ENCODE measurements at regions of chr15 and their contacts with region 1.

Region 1: GRCh38 chr15:90086868-90087268 is 15.4 kb downstream of the IDH2 start:
- DNase-seq: no peak
- ATAC-seq: no peak
- H3K4me3 ChIP-seq: no peak overlapping the region
- H3K27ac ChIP-seq: peak overlapping the region in 1 of 12 donors; percentile 52
- H3K4me1 ChIP-seq: peaks cover 0 to 19% (median 0%) of the 10 kb centered on the region in 12 donors
- H3K27me3 ChIP-seq: no peaks in the 10 kb centered on the region
- CTCF ChIP-seq: peak; percentile 27 to 65 (median 53)
- POLR2A ChIP-seq: no peak

Region 2: DNA sequence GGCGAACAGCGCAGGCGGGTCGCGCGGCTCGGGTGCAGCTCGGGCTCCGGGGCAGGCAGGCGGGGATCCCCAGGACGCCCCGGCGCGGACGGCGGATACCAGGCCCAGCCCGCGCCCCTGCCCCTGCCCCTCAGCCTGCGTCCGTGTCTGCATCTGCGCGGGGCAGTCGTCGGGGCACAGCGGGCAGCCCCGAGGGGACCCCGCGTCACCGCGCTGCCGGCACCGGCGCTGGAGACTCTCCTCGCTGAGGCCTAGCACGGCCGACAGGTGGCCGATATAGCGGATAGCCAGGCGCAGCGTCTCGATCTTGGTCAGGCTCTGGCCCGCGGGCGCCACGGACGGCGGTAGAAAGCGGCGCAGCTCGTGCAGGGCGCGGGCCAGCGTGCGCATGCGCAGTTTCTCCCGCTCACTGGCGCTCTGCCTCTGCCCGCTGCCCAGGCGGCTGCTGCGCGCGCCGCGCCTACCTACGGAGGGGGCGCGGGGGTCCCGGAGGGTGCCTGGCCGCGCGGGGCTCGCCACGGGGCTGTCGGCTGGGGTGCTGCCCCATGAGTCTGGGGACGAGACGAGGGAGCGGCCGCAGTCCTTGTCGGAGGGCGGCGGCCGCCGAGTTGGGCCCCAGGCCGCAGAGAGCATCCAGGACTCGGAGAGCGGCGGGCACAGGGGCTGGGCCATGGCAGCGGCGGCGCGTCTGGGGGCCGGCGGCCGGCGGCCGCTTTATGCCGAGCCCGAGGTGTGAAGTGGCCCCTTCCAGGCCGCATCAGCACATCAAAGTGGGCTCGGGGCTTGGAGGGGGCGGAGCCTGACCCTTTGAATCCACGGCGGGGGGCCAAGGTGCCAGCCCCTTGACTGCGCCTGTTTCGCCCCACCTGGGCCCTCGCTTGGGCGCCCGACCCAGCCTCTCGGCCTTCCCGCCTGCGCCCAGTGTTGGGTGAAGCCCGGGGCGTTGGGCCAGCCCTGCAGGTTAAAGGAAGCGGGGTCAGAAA is 336.0 kb before region 1 on chr15 and contains the start of gene MESP1:
- intact Hi-C with region 1: loop called in 1 of 10 experiments (anchors 10 kb)
- DNase-seq: peak; percentile 90 to 96 (median 93)
- ATAC-seq: peak; percentile 89 to 97 (median 94)
- H3K4me3 ChIP-seq: peak within 1 kb of the TSS; percentile 57 to 84 (median 74)
- H3K27ac ChIP-seq: peak within 1 kb of the TSS in 7 of 12 donors; percentile 27 to 81 (median 57)
- H3K4me1 ChIP-seq: peaks cover 0 to 18% (median 12%) of the 10 kb centered on the region in 12 donors
- H3K27me3 ChIP-seq: peaks cover 0 to 22% (median 4%) of the 10 kb centered on the region in 9 donors
- CTCF ChIP-seq: peak; percentile 40 to 93 (median 68)
- POLR2A ChIP-seq: peak in 1 of 2 donors; percentile 52
- total RNA-seq, gene MESP1: 1.3 to 6.9 (median 5.1) TPM

Region 3: DNA sequence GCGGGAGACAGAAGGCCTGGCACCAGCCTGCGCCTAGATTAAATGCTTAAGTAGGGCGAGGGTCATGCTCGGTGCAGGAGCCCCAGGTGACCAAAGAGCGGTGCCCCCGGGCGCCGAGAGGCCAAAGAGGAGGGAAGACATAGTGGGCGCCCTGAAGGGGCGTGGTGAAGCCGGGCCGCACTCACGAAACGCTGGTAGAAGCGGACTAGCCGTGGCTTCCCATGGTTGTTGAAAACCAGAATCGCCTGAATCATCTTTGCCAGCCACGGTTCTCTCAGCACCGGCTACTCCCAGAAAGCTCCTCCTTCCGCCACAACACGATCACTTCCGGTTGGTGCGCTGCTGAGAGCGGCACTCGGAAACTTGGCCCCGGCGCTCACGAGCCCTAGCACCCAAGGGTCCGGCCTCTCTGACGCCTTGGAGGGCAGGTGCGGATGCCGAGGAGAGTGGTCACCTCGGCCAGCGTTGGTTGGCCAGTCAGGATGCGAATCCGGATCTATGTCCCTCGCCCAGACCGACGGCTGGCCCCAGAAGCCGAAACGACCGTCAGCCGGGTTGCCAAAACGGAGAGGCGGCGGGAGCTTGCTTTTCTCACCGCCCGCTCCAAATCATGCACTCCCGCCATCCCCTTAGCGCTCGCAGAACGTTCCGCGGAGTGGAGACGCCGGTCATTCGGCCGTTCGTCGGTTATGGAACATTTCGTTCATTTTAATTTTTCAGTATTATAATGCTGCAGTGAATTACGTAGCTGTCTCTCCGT is 193.0 kb before region 1 on chr15 and contains the start of gene AP3S2:
- intact Hi-C with region 1: loop called in 1 of 10 experiments (anchors 5 kb)
- DNase-seq: peak; percentile 90 to 94 (median 93)
- ATAC-seq: peak; percentile 98 to 99 (median 99)
- H3K4me3 ChIP-seq: peak within 1 kb of the TSS; percentile 55 to 100 (median 91)
- H3K27ac ChIP-seq: peak within 1 kb of the TSS; percentile 42 to 98 (median 92)
- H3K4me1 ChIP-seq: peaks cover 0 to 30% (median 13%) of the 10 kb centered on the region in 12 donors
- H3K27me3 ChIP-seq: no peaks in the 10 kb centered on the region
- CTCF ChIP-seq: peak in 1 of 12 donors; percentile 7
- POLR2A ChIP-seq: peak in 1 of 2 donors; percentile 61
- total RNA-seq, gene AP3S2: 37.1 to 64.6 (median 43.3) TPM

Region 4: GRCh38 chr15:90126457-90127435 is 39.9 kb after region 1 on chr15:
- intact Hi-C with region 1: no loop called
- DNase-seq: peak; percentile 63 to 90 (median 74)
- ATAC-seq: peak; percentile 81 to 95 (median 91)
- H3K4me3 ChIP-seq: no peak overlapping the region
- H3K27ac ChIP-seq: peak overlapping the region; percentile 30 to 89 (median 77)
- H3K4me1 ChIP-seq: peaks cover 0 to 10% (median 2%) of the 10 kb centered on the region in 12 donors
- H3K27me3 ChIP-seq: no peaks in the 10 kb centered on the region
- CTCF ChIP-seq: no peak
- POLR2A ChIP-seq: no peak

Region 5: DNA sequence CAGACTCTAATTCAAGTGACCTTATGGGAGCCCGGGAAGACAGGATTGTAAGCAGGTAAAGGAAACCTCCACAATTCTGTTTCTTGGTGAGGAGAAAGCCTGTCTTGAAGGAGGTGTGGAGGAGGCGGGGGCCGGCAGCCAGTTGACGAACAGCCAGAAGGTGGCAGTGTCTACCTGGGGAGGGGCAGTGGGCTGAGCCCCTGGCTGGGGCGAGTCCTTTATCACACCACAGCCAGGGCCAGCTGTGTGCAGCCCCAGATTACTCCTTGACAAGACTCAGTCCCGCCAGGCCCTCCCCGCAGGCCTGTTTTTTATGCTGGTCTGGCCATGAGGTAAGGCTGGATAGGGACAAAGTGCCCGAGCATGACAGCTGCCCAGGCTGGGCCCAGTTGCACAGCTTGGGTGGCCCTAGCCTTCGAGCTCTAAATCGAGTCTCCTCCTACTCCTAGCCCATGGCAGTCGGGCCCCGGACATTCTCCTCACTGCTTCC is 56.3 kb after region 1 on chr15:
- intact Hi-C with region 1: loop called in 1 of 10 experiments (anchors 5 kb)
- DNase-seq: peak; percentile 42 to 69 (median 52)
- ATAC-seq: peak; percentile 58 to 86 (median 80)
- H3K4me3 ChIP-seq: no peak overlapping the region
- H3K27ac ChIP-seq: peak overlapping the region in 10 of 12 donors; percentile 24 to 71 (median 35)
- H3K4me1 ChIP-seq: peaks cover 0 to 12% (median 4%) of the 10 kb centered on the region in 12 donors
- H3K27me3 ChIP-seq: no peaks in the 10 kb centered on the region
- CTCF ChIP-seq: peak; percentile 30 to 70 (median 54)
- POLR2A ChIP-seq: no peak